ENCODE measurements at regions of chr13 and their contacts with region 1.

Region 1: DNA sequence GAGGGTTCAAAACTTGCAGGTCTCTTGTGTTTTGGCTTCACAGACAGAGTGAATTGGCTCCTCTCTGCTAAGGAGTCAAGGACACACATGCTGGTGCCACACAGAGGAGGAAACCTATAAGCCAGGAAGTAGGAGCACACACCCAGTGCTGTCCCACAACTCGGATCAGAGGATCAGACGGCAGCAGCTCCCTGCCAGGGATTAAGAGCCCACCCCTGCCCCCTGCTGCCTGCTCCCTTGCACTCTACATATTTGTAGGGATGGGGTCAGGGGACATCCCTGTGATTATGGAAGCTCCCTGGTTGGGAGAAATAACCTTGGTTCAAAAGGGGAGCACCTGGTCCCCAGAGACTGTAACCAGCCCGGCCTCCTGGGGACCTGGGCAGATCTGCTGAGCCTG is 77.5 kb upstream of the CLDN10 start:
- H3K4me3 ChIP-seq: no peak overlapping the region
- H3K27ac ChIP-seq: no peak overlapping the region
- H3K4me1 ChIP-seq: no peaks in the 10 kb centered on the region
- CTCF ChIP-seq: no peak

Region 2: GRCh38 chr13:95403828-95404522 is 71.0 kb before region 1 on chr13:
- CTCF ChIA-PET with region 1: interaction called, 10 read pairs
- POLR2A ChIA-PET with region 1: no interaction called
- H3K4me3 ChIP-seq: no peak overlapping the region
- H3K27ac ChIP-seq: no peak overlapping the region
- H3K4me1 ChIP-seq: no peaks in the 10 kb centered on the region
- CTCF ChIP-seq: no peak; the same call in 1 of the 2 replicates

Region 3: DNA sequence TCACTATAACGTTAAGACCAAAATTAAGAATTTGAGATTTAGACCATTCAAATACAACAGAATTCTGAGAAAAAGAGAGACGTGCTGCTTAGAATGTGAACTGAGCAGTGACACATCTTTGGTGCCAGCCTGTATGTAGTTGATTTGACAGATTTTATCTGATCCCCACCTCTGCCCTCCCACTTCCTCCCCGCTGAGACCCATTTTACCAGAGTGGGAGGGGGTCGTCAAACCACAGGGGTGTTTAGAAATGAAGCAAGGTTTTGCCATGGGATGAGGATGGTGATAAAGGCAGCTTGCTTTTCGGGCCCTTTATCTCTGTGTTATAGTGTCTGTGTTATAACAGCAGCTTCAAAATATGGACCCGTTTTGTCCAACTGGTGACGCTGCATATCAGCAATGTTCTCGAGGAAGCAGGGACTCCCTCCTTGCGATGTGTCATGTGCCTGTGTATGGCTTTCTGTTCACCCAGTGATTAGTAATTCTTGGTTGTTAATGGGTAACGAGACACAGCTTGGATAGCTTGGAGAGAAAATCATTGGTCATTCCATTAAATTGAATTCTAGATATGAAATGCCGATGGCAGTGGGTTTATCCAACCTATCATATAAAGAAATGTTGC is 739.9 kb after region 1 on chr13:
- CTCF ChIA-PET with region 1: no interaction called
- POLR2A ChIA-PET with region 1: no interaction called
- H3K4me3 ChIP-seq: no peak overlapping the region
- H3K27ac ChIP-seq: no peak overlapping the region
- H3K4me1 ChIP-seq: no peaks in the 10 kb centered on the region
- CTCF ChIP-seq: no peak

Measured in HEK293 (cell line).